ENCODE measurements at regions of chr1 and their contacts with region 1.

Region 1: GRCh38 chr1:15323351-15323988 is 76.4 kb downstream of the FHAD1 start:
- DNase-seq: peak; percentile 34 to 85
- H3K4me3 ChIP-seq: no peak overlapping the region
- H3K27ac ChIP-seq: no peak overlapping the region
- H3K4me1 ChIP-seq: peaks cover 0 to 11% (median 6%) of the 10 kb centered on the region in 4 experiments; a peak in 5 of 7 replicates
- H3K27me3 ChIP-seq: no peaks in the 10 kb centered on the region
- CTCF ChIP-seq: peak; percentile 92 to 99 (median 98)
- EP300 ChIP-seq: no peak
- POLR2A ChIP-seq: no peak
- RAD21 ChIP-seq: peak; percentile 79 to 89

Region 2: GRCh38 chr1:15272009-15272788 is 51.3 kb before region 1 on chr1:
- CTCF ChIA-PET with region 1: interaction called, 10 read pairs
- POLR2A ChIA-PET with region 1: no interaction called
- DNase-seq: peak; percentile 23 to 70
- H3K4me3 ChIP-seq: peak overlapping the region in 2 of 4 experiments; percentile 21 to 41; a peak in 3 of 8 replicates
- H3K27ac ChIP-seq: no peak overlapping the region
- H3K4me1 ChIP-seq: peaks cover 0 to 6% (median 0%) of the 10 kb centered on the region in 4 experiments; a peak in 2 of 7 replicates
- H3K27me3 ChIP-seq: peaks cover 0 to 4% (median 1%) of the 10 kb centered on the region in 4 experiments; a peak in 2 of 7 replicates
- CTCF ChIP-seq: peak; percentile 19 to 89 (median 85)
- EP300 ChIP-seq: no peak
- POLR2A ChIP-seq: no peak
- RAD21 ChIP-seq: peak; percentile 92 to 96

Region 3: GRCh38 chr1:15311880-15312279 is 11.6 kb before region 1 on chr1:
- CTCF ChIA-PET with region 1: interaction called, 24 read pairs
- POLR2A ChIA-PET with region 1: no interaction called
- DNase-seq: no peak
- H3K4me3 ChIP-seq: no peak overlapping the region
- H3K27ac ChIP-seq: no peak overlapping the region
- H3K4me1 ChIP-seq: no peaks in the 10 kb centered on the region; a peak in 1 of 7 replicates
- H3K27me3 ChIP-seq: no peaks in the 10 kb centered on the region; a peak in 1 of 7 replicates
- CTCF ChIP-seq: no peak
- EP300 ChIP-seq: no peak
- POLR2A ChIP-seq: no peak
- RAD21 ChIP-seq: no peak

Region 4: GRCh38 chr1:15370781-15371520 is 47.5 kb after region 1 on chr1:
- CTCF ChIA-PET with region 1: interaction called, 18 read pairs
- POLR2A ChIA-PET with region 1: no interaction called
- DNase-seq: no peak
- H3K4me3 ChIP-seq: no peak overlapping the region
- H3K27ac ChIP-seq: no peak overlapping the region
- H3K4me1 ChIP-seq: no peaks in the 10 kb centered on the region; a peak in 2 of 7 replicates
- H3K27me3 ChIP-seq: no peaks in the 10 kb centered on the region
- CTCF ChIP-seq: no peak
- EP300 ChIP-seq: no peak
- POLR2A ChIP-seq: no peak
- RAD21 ChIP-seq: no peak

Region 5: GRCh38 chr1:15411593-15412137 is 88.2 kb after region 1 on chr1:
- CTCF ChIA-PET with region 1: interaction called, 10 read pairs
- POLR2A ChIA-PET with region 1: no interaction called
- DNase-seq: no peak
- H3K4me3 ChIP-seq: no peak overlapping the region
- H3K27ac ChIP-seq: no peak overlapping the region
- H3K4me1 ChIP-seq: peaks cover 0 to 23% (median 4%) of the 10 kb centered on the region in 4 experiments; a peak in 6 of 7 replicates
- H3K27me3 ChIP-seq: peaks cover 0 to 19% (median 14%) of the 10 kb centered on the region in 4 experiments; a peak in 6 of 7 replicates
- CTCF ChIP-seq: no peak
- EP300 ChIP-seq: no peak
- POLR2A ChIP-seq: no peak
- RAD21 ChIP-seq: no peak

Region 6: GRCh38 chr1:15436881-15437442 is 113.5 kb after region 1 on chr1:
- CTCF ChIA-PET with region 1: interaction called, 170 read pairs
- POLR2A ChIA-PET with region 1: interaction called, 3 read pairs
- DNase-seq: no peak
- H3K4me3 ChIP-seq: no peak overlapping the region
- H3K27ac ChIP-seq: no peak overlapping the region
- H3K4me1 ChIP-seq: no peaks in the 10 kb centered on the region; a peak in 3 of 7 replicates
- H3K27me3 ChIP-seq: no peaks in the 10 kb centered on the region
- CTCF ChIP-seq: no peak
- EP300 ChIP-seq: no peak
- POLR2A ChIP-seq: no peak
- RAD21 ChIP-seq: no peak

Measured in H1 (cell line).